Activated CD4-positive, alpha-beta memory T cell treated with anti-CD3 and anti-CD28 coated beads, Interleukin-2, amount 10 ng/mL, durations not matched to agents 7 days and 5 days (primary cell): ENCODE measurements at regions of chr9 and their contacts with region 1.

Region 1: GRCh38 chr9:503881-504852 is 289.5 kb downstream of the DOCK8 start:
- DNase-seq: peak; percentile 78
- H3K4me3 Mint-ChIP-seq: peak within 1 kb of the TSS; percentile 77
- H3K27ac Mint-ChIP-seq: peak within 1 kb of the TSS; percentile 80
- H3K4me1 Mint-ChIP-seq: peaks cover 21% of the 10 kb centered on the region
- H3K27me3 Mint-ChIP-seq: peaks cover 12% of the 10 kb centered on the region

Region 2: GRCh38 chr9:515665-516064 is 11.5 kb after region 1 on chr9:
- CTCF ChIA-PET with region 1: interaction called, 5 read pairs
- POLR2A ChIA-PET with region 1: interaction called, 11 read pairs
- DNase-seq: no peak
- H3K4me3 Mint-ChIP-seq: no peak overlapping the region
- H3K27ac Mint-ChIP-seq: peak overlapping the region; percentile 51
- H3K4me1 Mint-ChIP-seq: peaks cover 40% of the 10 kb centered on the region
- H3K27me3 Mint-ChIP-seq: no peaks in the 10 kb centered on the region